ENCODE measurements at regions of chr11 and their contacts with region 1.

Region 1: GRCh38 chr11:82988936-82989627 is 82.6 kb downstream of the RAB30 start:
- DNase-seq: no peak
- ATAC-seq: no peak
- H3K4me3 ChIP-seq: no peak overlapping the region
- H3K4me3 Mint-ChIP-seq: peak overlapping the region in 1 of 10 donors; percentile 13
- H3K27ac ChIP-seq: no peak overlapping the region
- H3K27ac Mint-ChIP-seq: peak overlapping the region in 4 of 9 donors; percentile 22 to 69 (median 32)
- H3K4me1 ChIP-seq: peaks cover 0 to 4% of the 10 kb centered on the region in 2 donors
- H3K4me1 Mint-ChIP-seq: peaks cover 1 to 24% (median 15%) of the 10 kb centered on the region in 7 donors
- H3K27me3 ChIP-seq: no peaks in the 10 kb centered on the region
- H3K27me3 Mint-ChIP-seq: no peaks in the 10 kb centered on the region

Region 2: GRCh38 chr11:82698576-82699352 is 290.3 kb before region 1 on chr11:
- CTCF ChIA-PET with region 1: no interaction called
- POLR2A ChIA-PET with region 1: no interaction called
- intact Hi-C with region 1: no loop called
- DNase-seq: no peak
- ATAC-seq: no peak
- H3K4me3 ChIP-seq: no peak overlapping the region
- H3K4me3 Mint-ChIP-seq: no peak overlapping the region
- H3K27ac ChIP-seq: no peak overlapping the region
- H3K27ac Mint-ChIP-seq: no peak overlapping the region
- H3K4me1 ChIP-seq: no peaks in the 10 kb centered on the region
- H3K4me1 Mint-ChIP-seq: peaks cover 0 to 5% (median 0%) of the 10 kb centered on the region in 7 donors
- H3K27me3 ChIP-seq: no peaks in the 10 kb centered on the region
- H3K27me3 Mint-ChIP-seq: peaks cover 0 to 11% (median 5%) of the 10 kb centered on the region in 5 donors

Region 3: DNA sequence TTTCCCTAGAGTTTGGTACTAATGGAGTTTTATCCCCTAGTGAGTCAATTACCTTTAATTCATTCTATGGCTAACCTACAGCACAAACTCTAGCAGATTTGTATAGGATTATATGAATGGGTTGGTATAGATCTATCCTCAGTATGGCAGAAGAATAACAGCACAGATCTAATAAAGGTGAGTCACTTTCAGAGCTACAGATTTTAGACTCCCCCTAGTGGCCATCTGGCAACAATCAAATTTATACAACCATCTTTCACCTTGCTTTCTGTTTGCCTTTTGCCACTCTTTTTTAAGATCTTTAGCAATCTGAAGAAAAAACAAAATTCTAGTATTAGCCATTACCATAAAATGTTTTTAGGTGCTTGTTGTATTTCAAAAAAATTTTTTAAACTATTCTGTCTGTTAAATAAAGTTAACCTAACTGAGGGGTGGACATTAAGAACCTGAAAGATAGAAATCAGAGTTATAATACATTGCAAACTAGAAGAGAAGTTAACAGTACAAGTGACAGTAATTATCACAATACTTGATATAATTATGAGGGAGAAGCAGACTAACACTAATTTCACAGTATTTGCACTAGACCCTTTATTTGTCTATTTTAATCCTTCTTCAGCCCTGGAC is 61.7 kb before region 1 on chr11:
- CTCF ChIA-PET with region 1: interaction called, 12 read pairs
- POLR2A ChIA-PET with region 1: interaction called, 3 read pairs
- intact Hi-C with region 1: loop called (anchors 1 kb)
- DNase-seq: peak in 7 of 9 donors; percentile 51 to 77 (median 67)
- ATAC-seq: peak; percentile 89
- H3K4me3 ChIP-seq: no peak overlapping the region
- H3K4me3 Mint-ChIP-seq: peak overlapping the region in 2 of 10 donors; percentile 10 to 63
- H3K27ac ChIP-seq: no peak overlapping the region
- H3K27ac Mint-ChIP-seq: peak overlapping the region in 8 of 9 donors; percentile 26 to 76 (median 52)
- H3K4me1 ChIP-seq: peaks cover 0 to 23% of the 10 kb centered on the region in 2 donors
- H3K4me1 Mint-ChIP-seq: peaks cover 10 to 55% (median 45%) of the 10 kb centered on the region in 7 donors
- H3K27me3 ChIP-seq: no peaks in the 10 kb centered on the region
- H3K27me3 Mint-ChIP-seq: no peaks in the 10 kb centered on the region

Region 4: DNA sequence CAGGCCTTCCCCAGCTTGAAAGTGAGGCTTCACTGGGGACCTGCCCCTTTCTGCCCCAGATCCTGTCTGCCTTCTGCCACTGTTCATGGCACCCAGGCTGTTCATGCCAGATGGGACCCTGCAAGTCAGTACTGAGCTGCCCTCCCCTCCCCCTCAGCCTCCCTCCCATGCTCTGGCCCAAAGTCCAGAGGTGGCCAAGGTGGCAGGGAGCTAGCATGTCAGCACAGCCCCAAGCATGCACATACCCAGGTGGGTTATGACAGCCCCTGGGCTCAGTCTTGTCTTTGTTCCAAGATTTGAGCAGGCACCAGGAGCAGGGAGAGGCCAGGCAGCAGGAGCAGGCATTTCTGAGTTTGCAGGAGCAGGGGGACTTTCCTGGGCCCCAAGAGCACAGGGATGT is 43.4 kb before region 1 on chr11:
- CTCF ChIA-PET with region 1: no interaction called
- POLR2A ChIA-PET with region 1: no interaction called
- intact Hi-C with region 1: loop called in 1 of 2 experiments (anchors 1 kb)
- DNase-seq: no peak
- ATAC-seq: no peak
- H3K4me3 ChIP-seq: no peak overlapping the region
- H3K4me3 Mint-ChIP-seq: no peak overlapping the region
- H3K27ac ChIP-seq: no peak overlapping the region
- H3K27ac Mint-ChIP-seq: no peak overlapping the region
- H3K4me1 ChIP-seq: no peaks in the 10 kb centered on the region
- H3K4me1 Mint-ChIP-seq: peaks cover 0 to 28% (median 13%) of the 10 kb centered on the region in 7 donors
- H3K27me3 ChIP-seq: no peaks in the 10 kb centered on the region
- H3K27me3 Mint-ChIP-seq: peaks cover 0 to 21% (median 0%) of the 10 kb centered on the region in 5 donors

Region 5: GRCh38 chr11:83002053-83002452 is 13.0 kb after region 1 on chr11:
- CTCF ChIA-PET with region 1: no interaction called
- POLR2A ChIA-PET with region 1: no interaction called
- intact Hi-C with region 1: no loop called
- DNase-seq: peak in 6 of 9 donors; percentile 12 to 40 (median 30)
- ATAC-seq: peak; percentile 76
- H3K4me3 ChIP-seq: no peak overlapping the region
- H3K4me3 Mint-ChIP-seq: peak overlapping the region in 9 of 10 donors; percentile 0 to 66 (median 54)
- H3K27ac ChIP-seq: no peak overlapping the region
- H3K27ac Mint-ChIP-seq: peak overlapping the region in 8 of 9 donors; percentile 42 to 90 (median 72)
- H3K4me1 ChIP-seq: peaks cover 0 to 10% of the 10 kb centered on the region in 2 donors
- H3K4me1 Mint-ChIP-seq: peaks cover 13 to 54% (median 34%) of the 10 kb centered on the region in 7 donors
- H3K27me3 ChIP-seq: no peaks in the 10 kb centered on the region
- H3K27me3 Mint-ChIP-seq: no peaks in the 10 kb centered on the region